ENCODE measurements at regions of chr14 and their contacts with region 1.

Region 1: GRCh38 chr14:58637391-58638230 is at the start of gene DACT1:
- DNase-seq: peak; percentile 70 to 74
- ATAC-seq: peak; percentile 70 to 76 (median 72)
- H3K4me3 ChIP-seq: peak within 1 kb of the TSS; percentile 76
- H3K27ac ChIP-seq: peak within 1 kb of the TSS; percentile 68
- H3K4me1 ChIP-seq: peaks cover 18% of the 10 kb centered on the region
- H3K27me3 ChIP-seq: no peaks in the 10 kb centered on the region
- CTCF ChIP-seq: peak; percentile 18
- total RNA-seq, gene DACT1: 0.67 to 3.0 (median 1.5) TPM

Region 2: GRCh38 chr14:58501214-58501816 is 136.3 kb before region 1 on chr14:
- intact Hi-C with region 1: loop called in 1 of 2 experiments (anchors 5 kb)
- DNase-seq: no peak
- ATAC-seq: peak in 3 of 4 donors; percentile 74 to 81 (median 79)
- H3K4me3 ChIP-seq: no peak overlapping the region
- H3K27ac ChIP-seq: no peak overlapping the region
- H3K4me1 ChIP-seq: no peaks in the 10 kb centered on the region
- H3K27me3 ChIP-seq: no peaks in the 10 kb centered on the region
- CTCF ChIP-seq: peak; percentile 80

Region 3: DNA sequence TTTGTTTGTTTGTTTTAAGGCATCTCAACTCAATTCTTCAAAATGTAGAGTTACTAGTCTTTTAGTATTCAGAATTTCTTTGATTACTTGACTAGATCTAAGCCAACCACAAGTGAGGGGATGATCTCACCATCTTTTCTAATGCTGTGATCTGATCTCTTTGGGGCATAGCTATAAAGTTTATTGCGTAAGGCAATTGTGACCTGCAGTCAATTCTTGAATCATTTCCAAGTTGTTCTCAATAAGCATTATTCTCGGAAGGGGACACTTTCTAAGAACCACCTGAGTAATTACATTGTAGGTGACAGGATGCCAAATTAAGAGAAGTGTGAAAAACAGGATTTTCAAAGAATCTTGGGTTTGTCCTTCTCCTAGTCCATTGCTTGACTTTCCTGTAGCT is 13.2 kb after region 1 on chr14:
- intact Hi-C with region 1: no loop called
- DNase-seq: no peak
- ATAC-seq: no peak
- H3K4me3 ChIP-seq: no peak overlapping the region
- H3K27ac ChIP-seq: no peak overlapping the region
- H3K4me1 ChIP-seq: no peaks in the 10 kb centered on the region
- H3K27me3 ChIP-seq: no peaks in the 10 kb centered on the region
- CTCF ChIP-seq: no peak

Region 4: DNA sequence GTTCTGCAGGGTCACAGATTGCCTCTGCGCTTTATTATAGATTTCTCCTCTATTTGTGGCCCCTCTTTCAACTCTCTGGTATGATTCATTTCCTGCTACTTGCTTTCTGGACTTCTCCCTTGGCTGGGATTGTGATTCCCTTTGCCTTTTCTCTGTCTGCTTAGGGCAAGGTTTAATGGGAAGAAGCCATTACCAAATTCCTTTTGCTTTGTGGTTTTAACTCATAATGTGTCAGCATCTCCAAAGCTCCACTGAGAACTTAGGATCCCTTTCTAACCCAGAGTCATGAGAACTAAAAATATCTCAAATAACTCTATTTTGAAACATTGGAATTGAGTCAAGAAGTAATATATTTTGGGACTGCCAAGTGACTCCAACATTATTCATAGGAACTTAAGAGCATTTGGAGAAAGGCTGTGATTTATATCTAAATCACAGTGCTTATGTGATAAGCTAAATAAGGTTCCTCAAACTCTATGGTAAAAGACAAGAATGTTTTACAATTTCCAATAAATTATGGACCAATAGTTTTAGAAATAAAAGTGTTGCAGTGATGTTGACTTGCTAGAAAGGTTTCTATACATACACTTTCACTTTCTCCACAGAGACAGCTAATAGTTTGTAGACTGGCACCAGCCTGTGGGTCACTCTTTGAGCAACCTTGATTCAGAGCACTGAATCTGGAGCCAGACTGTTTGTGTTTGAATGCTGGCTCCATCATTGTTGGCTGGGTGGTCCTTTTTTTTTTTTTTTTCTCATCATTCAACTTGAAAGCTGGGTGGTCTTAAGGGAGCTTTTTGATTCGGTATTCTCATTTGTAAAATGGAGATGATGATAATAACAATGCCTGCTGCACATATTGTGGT is 94.1 kb after region 1 on chr14:
- intact Hi-C with region 1: loop called in 1 of 2 experiments (anchors 5 kb)
- DNase-seq: no peak
- ATAC-seq: peak; percentile 67 to 80 (median 74)
- H3K4me3 ChIP-seq: no peak overlapping the region
- H3K27ac ChIP-seq: peak overlapping the region; percentile 54
- H3K4me1 ChIP-seq: peaks cover 24% of the 10 kb centered on the region
- H3K27me3 ChIP-seq: no peaks in the 10 kb centered on the region
- CTCF ChIP-seq: no peak

Region 5: GRCh38 chr14:58826845-58827686 is 189.5 kb after region 1 on chr14:
- intact Hi-C with region 1: loop called in 1 of 2 experiments (anchors 10 kb)
- DNase-seq: no peak
- ATAC-seq: no peak
- H3K4me3 ChIP-seq: no peak overlapping the region
- H3K27ac ChIP-seq: no peak overlapping the region
- H3K4me1 ChIP-seq: peaks cover 26% of the 10 kb centered on the region
- H3K27me3 ChIP-seq: no peaks in the 10 kb centered on the region
- CTCF ChIP-seq: peak; percentile 42

Region 6: GRCh38 chr14:59028476-59029202 is 391.0 kb after region 1 on chr14:
- intact Hi-C with region 1: loop called (anchors 2 to 10 kb)
- DNase-seq: peak; percentile 38 to 64
- ATAC-seq: peak; percentile 68 to 89 (median 76)
- H3K4me3 ChIP-seq: no peak overlapping the region
- H3K27ac ChIP-seq: no peak overlapping the region
- H3K4me1 ChIP-seq: no peaks in the 10 kb centered on the region
- H3K27me3 ChIP-seq: no peaks in the 10 kb centered on the region
- CTCF ChIP-seq: peak; percentile 76

Region 7: GRCh38 chr14:59055439-59056045 is 417.9 kb after region 1 on chr14:
- intact Hi-C with region 1: loop called in 1 of 2 experiments (anchors 10 kb)
- DNase-seq: no peak
- ATAC-seq: peak in 3 of 4 donors; percentile 57 to 86 (median 79)
- H3K4me3 ChIP-seq: no peak overlapping the region
- H3K27ac ChIP-seq: no peak overlapping the region
- H3K4me1 ChIP-seq: no peaks in the 10 kb centered on the region
- H3K27me3 ChIP-seq: no peaks in the 10 kb centered on the region
- CTCF ChIP-seq: peak; percentile 70